Caco-2 (cell line): ENCODE measurements at regions of chr19 and their contacts with region 1.

Region 1: DNA sequence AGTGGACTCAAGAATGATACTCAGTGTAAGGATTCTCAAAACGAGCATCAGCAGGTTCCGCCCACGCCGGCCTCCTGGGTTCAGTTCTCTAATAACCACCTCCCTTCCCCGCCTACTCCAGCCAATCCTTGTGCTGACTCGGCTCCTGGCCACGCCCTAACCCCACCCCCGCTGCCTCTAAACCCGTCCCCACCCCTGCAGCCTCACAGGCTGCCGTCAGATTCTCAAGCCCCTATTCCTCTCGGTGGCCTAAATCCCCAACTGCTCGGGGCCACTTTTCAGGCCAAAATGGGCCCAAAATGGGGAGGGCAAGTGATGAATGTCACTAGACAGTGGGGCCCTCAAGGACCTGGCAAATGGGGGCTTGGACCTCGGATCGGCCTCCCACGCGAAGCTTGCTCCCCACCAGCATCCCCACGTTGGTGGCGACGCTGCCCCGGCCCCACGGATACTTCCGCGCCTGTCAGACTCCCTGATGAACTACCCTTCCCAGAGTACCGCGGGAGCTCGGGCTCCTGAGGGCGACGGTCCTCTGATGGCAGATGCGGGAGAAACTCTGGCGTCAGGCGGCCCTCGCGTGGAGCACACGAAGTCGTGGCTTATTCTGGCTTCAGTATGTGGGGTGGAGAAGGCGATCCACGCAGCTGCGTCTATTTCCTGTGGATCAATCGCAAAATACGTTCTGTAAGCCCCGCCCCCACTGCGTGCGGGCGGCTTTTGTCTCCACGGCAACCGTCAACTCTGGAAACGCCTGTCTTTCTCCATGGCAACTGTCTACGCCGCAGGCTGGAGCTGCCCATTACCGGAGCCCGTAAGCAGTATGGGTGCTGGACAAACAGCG is 24.8 kb downstream of the ZNF473 start:
- DNase-seq: peak; percentile 89 to 90
- H3K4me3 ChIP-seq: peak overlapping the region; percentile 56
- H3K4me3 Mint-ChIP-seq: peak overlapping the region; percentile 76
- H3K27ac Mint-ChIP-seq: peak overlapping the region; percentile 86
- H3K4me1 ChIP-seq: peaks cover 18% of the 10 kb centered on the region
- H3K4me1 Mint-ChIP-seq: peaks cover 13% of the 10 kb centered on the region
- H3K27me3 ChIP-seq: no peaks in the 10 kb centered on the region
- H3K27me3 Mint-ChIP-seq: no peaks in the 10 kb centered on the region
- CTCF ChIP-seq: no peak

Region 2: GRCh38 chr19:50008532-50008931 is 42.1 kb before region 1 on chr19:
- CTCF ChIA-PET with region 1: no interaction called
- POLR2A ChIA-PET with region 1: no interaction called
- intact Hi-C with region 1: no loop called
- DNase-seq: peak in 1 of 2 experiments; percentile 52
- H3K4me3 ChIP-seq: no peak overlapping the region
- H3K4me3 Mint-ChIP-seq: no peak overlapping the region
- H3K27ac Mint-ChIP-seq: no peak overlapping the region
- H3K4me1 ChIP-seq: no peaks in the 10 kb centered on the region
- H3K4me1 Mint-ChIP-seq: no peaks in the 10 kb centered on the region
- H3K27me3 ChIP-seq: no peaks in the 10 kb centered on the region
- H3K27me3 Mint-ChIP-seq: no peaks in the 10 kb centered on the region
- CTCF ChIP-seq: peak in 1 of 2 experiments; percentile 48

Region 3: DNA sequence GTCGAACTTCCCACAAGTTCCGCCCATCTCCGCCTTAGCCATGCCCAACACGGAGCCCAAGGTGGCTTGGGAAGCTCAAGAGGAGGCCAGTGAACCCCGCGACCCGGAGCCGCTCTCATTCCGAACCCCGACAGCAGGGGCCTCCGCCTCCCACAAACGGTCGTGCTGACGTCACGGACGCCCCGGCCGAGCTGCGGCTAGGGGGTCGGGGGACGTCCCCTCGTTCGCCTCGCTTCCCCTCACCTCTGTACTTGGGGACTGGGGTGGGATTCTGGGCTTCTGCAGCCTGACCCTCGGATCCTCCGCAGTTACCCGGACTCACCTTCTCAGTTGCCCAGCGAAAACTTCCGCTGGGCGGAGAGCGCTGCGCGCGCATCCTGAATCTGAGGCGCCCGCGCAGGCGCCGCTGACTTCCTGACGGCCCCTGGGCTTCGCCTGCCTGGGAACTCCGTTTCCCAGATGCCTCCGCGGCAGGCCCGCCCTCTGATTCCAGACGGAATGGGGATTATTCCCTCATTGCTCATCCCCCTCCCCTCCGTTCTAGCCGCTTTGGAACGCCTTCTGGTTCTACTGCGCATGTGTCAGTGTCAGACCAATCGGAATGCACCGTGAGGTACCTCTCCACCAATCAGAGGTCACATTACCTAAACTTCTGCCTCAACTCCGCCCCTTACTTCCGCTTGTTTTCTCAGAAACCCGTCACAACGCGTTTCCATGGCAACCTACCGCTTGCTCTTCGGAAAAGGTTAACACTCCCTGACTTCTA is 25.4 kb before region 1 on chr19 and contains the start of gene VRK3:
- CTCF ChIA-PET with region 1: no interaction called
- POLR2A ChIA-PET with region 1: no interaction called
- intact Hi-C with region 1: loop called (anchors 2 kb)
- DNase-seq: peak; percentile 99 to 100
- H3K4me3 ChIP-seq: peak within 1 kb of the TSS; percentile 100
- H3K4me3 Mint-ChIP-seq: peak within 1 kb of the TSS; percentile 94
- H3K27ac Mint-ChIP-seq: peak within 1 kb of the TSS; percentile 99
- H3K4me1 ChIP-seq: no peaks in the 10 kb centered on the region
- H3K4me1 Mint-ChIP-seq: peaks cover 6% of the 10 kb centered on the region
- H3K27me3 ChIP-seq: no peaks in the 10 kb centered on the region
- H3K27me3 Mint-ChIP-seq: no peaks in the 10 kb centered on the region
- CTCF ChIP-seq: peak in 1 of 2 experiments; percentile 16
- total RNA-seq, gene VRK3: 44.2 and 46.3 TPM in 2 replicates

Region 4: GRCh38 chr19:50067575-50067974 is 17.0 kb after region 1 on chr19:
- CTCF ChIA-PET with region 1: no interaction called
- POLR2A ChIA-PET with region 1: no interaction called
- intact Hi-C with region 1: no loop called
- DNase-seq: no peak
- H3K4me3 ChIP-seq: no peak overlapping the region
- H3K4me3 Mint-ChIP-seq: no peak overlapping the region
- H3K27ac Mint-ChIP-seq: no peak overlapping the region
- H3K4me1 ChIP-seq: no peaks in the 10 kb centered on the region
- H3K4me1 Mint-ChIP-seq: no peaks in the 10 kb centered on the region
- H3K27me3 ChIP-seq: no peaks in the 10 kb centered on the region
- H3K27me3 Mint-ChIP-seq: peaks cover 5% of the 10 kb centered on the region
- CTCF ChIP-seq: no peak